PC-3 (cell line): ENCODE measurements at regions of chr2 and their contacts with region 1.

Region 1: GRCh38 chr2:9525266-9525665 is 30.4 kb downstream of the ADAM17 start:
- DNase-seq: no peak
- ATAC-seq: no peak
- H3K4me3 ChIP-seq: no peak overlapping the region
- H3K27ac ChIP-seq: no peak overlapping the region
- H3K4me1 ChIP-seq: peaks cover 4% of the 10 kb centered on the region; the same call in 1 of the 2 replicates
- H3K27me3 ChIP-seq: no peaks in the 10 kb centered on the region
- CTCF ChIP-seq: no peak

Region 2: DNA sequence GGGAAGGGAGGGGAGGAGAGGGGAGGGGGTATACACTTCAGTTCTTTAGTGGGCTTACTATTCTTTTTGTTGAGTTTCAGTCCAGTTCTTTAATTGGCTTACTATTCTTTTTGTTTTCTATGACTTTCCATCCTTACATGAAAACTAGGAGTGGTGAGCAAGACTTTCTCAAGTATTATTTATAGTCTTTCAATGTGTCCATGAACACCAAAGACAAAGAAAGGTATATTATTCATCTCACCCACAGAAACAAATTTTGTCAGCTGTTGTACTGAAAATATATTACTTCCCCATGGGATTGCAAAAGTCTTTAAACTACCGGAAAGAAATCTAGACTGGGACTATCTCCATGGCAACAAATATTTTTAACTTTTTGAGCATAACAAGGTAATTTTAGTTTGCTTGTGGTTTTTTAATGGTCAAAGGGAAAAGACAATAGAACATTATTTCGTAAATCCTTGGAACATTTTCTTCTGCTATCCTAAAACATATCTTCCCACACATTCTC is 12.8 kb after region 1 on chr2:
- CTCF ChIA-PET with region 1: no interaction called
- POLR2A ChIA-PET with region 1: interaction called, 27 read pairs
- intact Hi-C with region 1: no loop called
- DNase-seq: peak; percentile 10
- ATAC-seq: no peak
- H3K4me3 ChIP-seq: no peak overlapping the region
- H3K27ac ChIP-seq: peak overlapping the region; percentile 7; the same call in 1 of the 2 replicates
- H3K4me1 ChIP-seq: no peaks in the 10 kb centered on the region
- H3K27me3 ChIP-seq: no peaks in the 10 kb centered on the region
- CTCF ChIP-seq: no peak

Region 3: GRCh38 chr2:9565436-9566153 is 40.3 kb after region 1 on chr2:
- CTCF ChIA-PET with region 1: no interaction called
- POLR2A ChIA-PET with region 1: no interaction called
- intact Hi-C with region 1: no loop called
- DNase-seq: peak; percentile 94
- ATAC-seq: peak; percentile 100
- H3K4me3 ChIP-seq: no peak overlapping the region
- H3K27ac ChIP-seq: peak overlapping the region; percentile 64
- H3K4me1 ChIP-seq: peaks cover 12% of the 10 kb centered on the region
- H3K27me3 ChIP-seq: no peaks in the 10 kb centered on the region
- CTCF ChIP-seq: no peak

Region 4: GRCh38 chr2:10097352-10098148 is 572.3 kb after region 1 on chr2:
- CTCF ChIA-PET with region 1: no interaction called
- POLR2A ChIA-PET with region 1: no interaction called
- intact Hi-C with region 1: no loop called
- DNase-seq: peak; percentile 77
- ATAC-seq: peak; percentile 99
- H3K4me3 ChIP-seq: no peak overlapping the region
- H3K27ac ChIP-seq: no peak overlapping the region
- H3K4me1 ChIP-seq: no peaks in the 10 kb centered on the region
- H3K27me3 ChIP-seq: no peaks in the 10 kb centered on the region
- CTCF ChIP-seq: peak; percentile 89